ENCODE measurements at regions of chr6 and their contacts with region 1.

Region 1: GRCh38 chr6:107866606-107867301 is 42.6 kb upstream of the SCML4 start:
- DNase-seq: peak; percentile 43 to 52 (median 49)
- H3K4me3 ChIP-seq: no peak overlapping the region
- H3K4me3 Mint-ChIP-seq: peak overlapping the region in 2 of 8 donors; percentile 11 to 20
- H3K27ac ChIP-seq: no peak overlapping the region
- H3K27ac Mint-ChIP-seq: peak overlapping the region in 3 of 7 donors; percentile 22 to 75 (median 42)
- H3K4me1 ChIP-seq: peaks cover 6% of the 10 kb centered on the region
- H3K4me1 Mint-ChIP-seq: peaks cover 0 to 3% (median 2%) of the 10 kb centered on the region in 4 donors
- H3K27me3 ChIP-seq: no peaks in the 10 kb centered on the region
- H3K27me3 Mint-ChIP-seq: peaks cover 0 to 2% of the 10 kb centered on the region in 2 donors

Region 2: DNA sequence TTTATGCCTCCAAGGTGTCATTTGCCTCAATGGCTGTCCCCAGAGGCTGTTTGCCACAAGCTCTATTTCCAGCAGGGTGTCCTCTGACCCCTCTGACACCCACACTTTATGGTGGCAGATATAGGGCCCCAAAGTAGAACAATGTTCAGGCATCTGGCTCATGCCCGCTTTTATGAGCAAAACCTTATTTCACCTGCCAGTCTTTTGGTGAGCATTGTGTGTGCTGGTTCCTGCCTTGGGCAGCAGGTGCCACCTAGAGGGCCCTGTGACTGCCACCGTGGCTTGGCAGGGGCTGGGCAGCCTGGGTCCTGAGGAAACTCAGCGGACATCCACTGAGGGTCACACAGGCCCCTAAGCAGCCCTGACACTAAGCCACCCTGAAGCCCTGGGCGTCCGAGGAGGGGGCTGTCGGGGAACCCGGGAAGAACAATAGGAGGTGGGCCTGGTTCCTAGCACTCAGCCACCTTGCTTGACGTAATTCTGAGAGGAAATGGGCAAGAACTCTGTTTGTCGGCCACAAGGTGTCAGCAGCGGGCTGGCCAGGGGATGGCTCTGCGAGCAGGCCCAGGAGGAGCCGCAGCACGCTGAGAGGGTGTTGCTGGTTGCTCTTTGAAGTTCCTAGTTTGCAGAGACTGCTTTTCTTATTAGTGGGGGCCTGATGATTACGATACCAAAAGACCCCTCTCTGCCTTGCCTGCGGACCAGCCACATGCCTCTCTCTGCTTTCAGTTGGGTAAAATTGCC is 191.6 kb before region 1 on chr6:
- CTCF ChIA-PET with region 1: interaction called, 111 read pairs
- POLR2A ChIA-PET with region 1: no interaction called
- intact Hi-C with region 1: loop called (anchors 1 kb)
- DNase-seq: peak; percentile 83 to 86 (median 84)
- H3K4me3 ChIP-seq: peak overlapping the region in 1 of 2 donors; percentile 6
- H3K4me3 Mint-ChIP-seq: peak overlapping the region in 6 of 8 donors; percentile 49 to 81 (median 64)
- H3K27ac ChIP-seq: no peak overlapping the region
- H3K27ac Mint-ChIP-seq: peak overlapping the region; percentile 32 to 92 (median 91)
- H3K4me1 ChIP-seq: peaks cover 17% of the 10 kb centered on the region
- H3K4me1 Mint-ChIP-seq: peaks cover 6 to 14% (median 11%) of the 10 kb centered on the region in 4 donors
- H3K27me3 ChIP-seq: no peaks in the 10 kb centered on the region
- H3K27me3 Mint-ChIP-seq: no peaks in the 10 kb centered on the region

Region 3: GRCh38 chr6:107877968-107878367 is 11.2 kb after region 1 on chr6:
- CTCF ChIA-PET with region 1: interaction called, 18 read pairs
- POLR2A ChIA-PET with region 1: no interaction called
- intact Hi-C with region 1: no loop called
- DNase-seq: no peak
- H3K4me3 ChIP-seq: no peak overlapping the region
- H3K4me3 Mint-ChIP-seq: no peak overlapping the region
- H3K27ac ChIP-seq: no peak overlapping the region
- H3K27ac Mint-ChIP-seq: peak overlapping the region in 1 of 7 donors; percentile 31
- H3K4me1 ChIP-seq: no peaks in the 10 kb centered on the region
- H3K4me1 Mint-ChIP-seq: no peaks in the 10 kb centered on the region
- H3K27me3 ChIP-seq: no peaks in the 10 kb centered on the region
- H3K27me3 Mint-ChIP-seq: no peaks in the 10 kb centered on the region

Measured in CD4-positive, alpha-beta memory T cell (primary cell).